ENCODE measurements at regions of chr15 and their contacts with region 1.

Region 1: GRCh38 chr15:52179278-52180195 is 11.7 kb downstream of the GNB5 start:
- DNase-seq: peak; percentile 87
- H3K4me3 Mint-ChIP-seq: peak overlapping the region; percentile 81
- H3K27ac Mint-ChIP-seq: peak overlapping the region; percentile 93
- H3K4me1 Mint-ChIP-seq: peaks cover 10% of the 10 kb centered on the region
- H3K27me3 Mint-ChIP-seq: no peaks in the 10 kb centered on the region
- CTCF ChIP-seq: peak; percentile 21

Region 2: GRCh38 chr15:51253366-51253765 is 926.2 kb before region 1 on chr15:
- CTCF ChIA-PET with region 1: no interaction called
- POLR2A ChIA-PET with region 1: no interaction called
- intact Hi-C with region 1: no loop called
- DNase-seq: peak; percentile 5
- H3K4me3 Mint-ChIP-seq: no peak overlapping the region
- H3K27ac Mint-ChIP-seq: no peak overlapping the region
- H3K4me1 Mint-ChIP-seq: peaks cover 8% of the 10 kb centered on the region
- H3K27me3 Mint-ChIP-seq: no peaks in the 10 kb centered on the region
- CTCF ChIP-seq: no peak

Region 3: GRCh38 chr15:52139599-52140491 is 39.7 kb before region 1 on chr15:
- CTCF ChIA-PET with region 1: interaction called, 11 read pairs
- POLR2A ChIA-PET with region 1: interaction called, 12 read pairs
- intact Hi-C with region 1: no loop called
- DNase-seq: peak; percentile 80
- H3K4me3 Mint-ChIP-seq: no peak overlapping the region
- H3K27ac Mint-ChIP-seq: peak overlapping the region; percentile 91
- H3K4me1 Mint-ChIP-seq: peaks cover 23% of the 10 kb centered on the region
- H3K27me3 Mint-ChIP-seq: no peaks in the 10 kb centered on the region
- CTCF ChIP-seq: peak; percentile 83

Region 4: GRCh38 chr15:52200831-52201365 is 21.4 kb after region 1 on chr15:
- CTCF ChIA-PET with region 1: interaction called, 14 read pairs
- POLR2A ChIA-PET with region 1: interaction called, 3 read pairs
- intact Hi-C with region 1: no loop called
- DNase-seq: no peak
- H3K4me3 Mint-ChIP-seq: no peak overlapping the region
- H3K27ac Mint-ChIP-seq: no peak overlapping the region
- H3K4me1 Mint-ChIP-seq: no peaks in the 10 kb centered on the region
- H3K27me3 Mint-ChIP-seq: no peaks in the 10 kb centered on the region
- CTCF ChIP-seq: no peak

Region 5: DNA sequence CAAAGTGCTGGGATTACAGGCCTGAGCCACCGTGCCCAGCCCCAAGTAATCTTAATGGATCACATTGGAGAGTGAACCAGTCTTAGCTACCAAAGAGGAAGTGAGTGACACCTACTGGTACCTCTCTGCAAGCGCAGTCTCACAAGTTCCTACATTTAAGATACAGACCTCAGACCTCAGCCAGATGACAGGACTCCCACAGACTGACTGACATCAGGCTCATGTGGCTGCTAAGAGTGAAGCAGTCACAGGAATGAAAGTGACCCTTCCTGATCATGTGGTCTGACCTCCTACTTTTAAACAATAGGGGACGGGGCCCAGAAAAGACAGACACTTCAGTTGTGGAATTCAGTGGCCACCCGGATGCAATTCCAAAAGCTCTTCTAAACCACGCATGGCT is 47.9 kb after region 1 on chr15:
- CTCF ChIA-PET with region 1: interaction called, 46 read pairs
- POLR2A ChIA-PET with region 1: interaction called, 3 read pairs
- intact Hi-C with region 1: no loop called
- DNase-seq: peak; percentile 73
- H3K4me3 Mint-ChIP-seq: no peak overlapping the region
- H3K27ac Mint-ChIP-seq: no peak overlapping the region
- H3K4me1 Mint-ChIP-seq: no peaks in the 10 kb centered on the region
- H3K27me3 Mint-ChIP-seq: no peaks in the 10 kb centered on the region
- CTCF ChIP-seq: peak; percentile 77